Motor neuron (in vitro differentiated cells): ENCODE measurements at regions of chr17 and their contacts with region 1.

Region 1: GRCh38 chr17:56319517-56319916 is 166.2 kb downstream of the ANKFN1 start:
- ATAC-seq: peak; percentile 42 to 87 (median 59)
- H3K4me3 ChIP-seq: no peak overlapping the region
- H3K27ac ChIP-seq: no peak overlapping the region
- H3K4me1 ChIP-seq: peaks cover 3 to 13% of the 10 kb centered on the region in 2 donors

Region 2: DNA sequence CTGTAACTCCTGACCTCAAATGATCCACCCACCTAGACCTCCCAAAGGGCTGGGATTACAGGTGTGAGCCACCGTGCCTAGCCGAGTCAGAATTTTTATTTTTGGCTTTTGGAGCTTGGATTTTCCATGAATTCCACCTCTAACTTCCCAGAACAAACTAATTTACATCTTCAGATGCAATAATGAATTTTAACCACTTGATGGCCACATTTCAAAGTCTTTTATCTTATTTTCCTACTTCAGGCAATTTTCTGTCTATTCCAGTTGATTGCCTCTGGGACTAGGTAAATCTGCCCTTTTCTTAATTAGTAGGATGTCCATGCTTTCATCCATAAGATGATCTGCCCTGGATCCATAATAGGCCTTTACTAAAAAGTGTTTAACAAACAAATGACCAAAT is 322.7 kb before region 1 on chr17:
- in situ Hi-C with region 1: loop called in 1 of 9 experiments (anchors 25 kb)
- ATAC-seq: no peak
- H3K4me3 ChIP-seq: no peak overlapping the region
- H3K27ac ChIP-seq: no peak overlapping the region
- H3K4me1 ChIP-seq: no peaks in the 10 kb centered on the region

Region 3: DNA sequence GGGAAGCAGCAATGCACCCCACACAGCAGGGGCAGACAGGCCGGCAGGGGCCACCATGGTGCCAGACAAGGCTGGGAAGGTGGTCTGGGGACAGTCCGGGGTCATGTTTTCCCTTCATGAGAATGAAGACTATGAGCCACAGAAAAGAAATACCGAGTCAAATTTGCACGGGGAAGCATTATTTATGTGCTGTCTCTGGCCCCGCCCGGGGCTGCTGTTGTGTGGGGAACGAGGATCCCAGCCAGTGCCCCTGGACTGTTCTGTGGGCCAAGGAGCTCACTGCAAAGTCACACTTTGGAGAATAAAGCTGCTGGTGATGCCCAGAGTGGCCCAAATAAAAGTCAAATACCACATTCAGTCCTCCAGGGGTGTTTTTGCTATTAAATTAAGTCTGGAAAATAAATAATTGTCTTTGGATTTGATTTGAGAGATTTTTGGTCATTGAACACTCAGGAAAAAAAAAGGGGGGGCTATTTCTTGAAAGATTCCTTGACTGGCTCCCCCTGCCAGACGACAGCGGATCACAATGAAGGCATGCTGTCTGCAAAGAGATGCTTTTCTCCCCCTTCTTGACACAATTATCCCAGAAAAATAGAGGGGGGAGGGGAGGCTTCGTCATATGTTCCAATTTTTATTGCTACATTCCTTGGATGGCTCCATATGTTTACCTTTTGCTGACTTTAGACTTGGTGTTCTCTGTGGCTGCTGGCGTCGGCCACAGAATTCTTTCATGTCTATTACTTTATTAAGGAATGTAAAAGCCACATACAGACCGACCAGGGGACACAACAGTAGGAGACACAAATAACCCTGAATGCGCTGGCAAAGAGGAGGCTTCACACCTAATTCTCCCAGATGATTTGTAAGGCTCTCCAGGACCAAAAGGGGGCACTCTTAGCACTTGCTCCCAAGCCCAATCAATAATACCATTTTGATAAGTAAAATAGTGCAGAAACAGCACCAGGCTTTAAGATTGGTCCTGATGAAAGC is 193.4 kb before region 1 on chr17:
- in situ Hi-C with region 1: loop called in 2 of 9 experiments (anchors 10 to 25 kb)
- ATAC-seq: peak in 4 of 8 experiments; percentile 13 to 55 (median 26)
- H3K4me3 ChIP-seq: no peak overlapping the region
- H3K27ac ChIP-seq: no peak overlapping the region
- H3K4me1 ChIP-seq: peaks cover 11 to 13% of the 10 kb centered on the region in 2 donors

Region 4: GRCh38 chr17:57068222-57068658 is 748.7 kb after region 1 on chr17:
- in situ Hi-C with region 1: no loop called
- ATAC-seq: peak in 5 of 8 experiments; percentile 46 to 66 (median 54)
- H3K4me3 ChIP-seq: no peak overlapping the region
- H3K27ac ChIP-seq: no peak overlapping the region
- H3K4me1 ChIP-seq: peaks cover 6 to 9% of the 10 kb centered on the region in 2 donors